ENCODE measurements at regions of chr5 and their contacts with region 1.

Region 1: DNA sequence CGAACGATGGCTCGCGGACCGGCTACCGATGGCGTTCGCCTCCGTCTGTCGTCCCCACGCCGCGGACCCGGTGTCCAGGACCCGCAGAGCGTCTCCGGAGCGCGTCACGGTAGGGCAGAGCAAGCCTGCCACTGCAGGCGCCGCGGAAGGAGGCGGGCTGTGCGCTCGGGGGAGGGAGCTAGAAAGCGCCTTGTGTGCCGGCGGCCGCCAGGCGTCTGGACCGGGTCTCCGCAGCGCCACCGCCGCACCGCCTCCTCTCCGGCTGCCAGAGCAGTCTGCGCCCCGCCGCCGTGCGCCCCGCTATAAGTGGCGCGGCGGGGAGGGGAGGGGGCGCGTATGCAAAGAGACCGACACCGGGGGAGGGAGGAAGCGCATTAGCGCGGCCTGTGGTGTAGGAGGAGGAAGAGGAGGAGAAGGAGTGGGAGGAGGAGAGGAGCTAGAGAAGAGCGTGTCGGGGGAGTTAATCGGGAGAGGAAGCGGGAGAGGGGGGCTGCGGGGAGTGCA is at the start of gene ENC1:
- DNase-seq: peak; percentile 88 to 93
- ATAC-seq: peak; percentile 90 to 92 (median 92)
- H3K4me3 ChIP-seq: peak within 1 kb of the TSS; percentile 78
- H3K27ac ChIP-seq: peak within 1 kb of the TSS; percentile 82
- H3K4me1 ChIP-seq: peaks cover 18% of the 10 kb centered on the region
- H3K27me3 ChIP-seq: no peaks in the 10 kb centered on the region
- CTCF ChIP-seq: peak; percentile 65
- total RNA-seq, gene ENC1: 2.4 to 28.3 (median 10.6) TPM

Region 2: DNA sequence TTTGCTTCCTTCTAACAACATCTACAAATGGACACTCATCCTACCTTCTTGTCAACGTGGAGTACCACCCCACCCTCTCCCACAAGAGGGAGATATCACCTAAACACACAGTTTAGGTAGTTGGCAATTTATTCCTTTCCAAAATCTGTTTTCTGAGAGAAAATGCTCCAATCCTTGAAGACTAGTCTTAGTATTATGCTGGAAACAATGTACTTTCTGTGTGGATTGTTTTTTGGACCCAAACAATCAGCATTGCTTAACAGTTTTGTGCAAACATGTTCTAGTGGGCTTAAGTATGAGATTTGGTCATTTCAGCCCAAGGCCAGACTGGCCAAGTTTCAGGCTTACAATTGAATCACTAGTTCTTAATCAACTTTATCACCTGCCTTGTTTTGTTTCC is 655.4 kb before region 1 on chr5:
- intact Hi-C with region 1: loop called in 1 of 2 experiments (anchors 5 kb)
- DNase-seq: no peak
- ATAC-seq: no peak
- H3K4me3 ChIP-seq: no peak overlapping the region
- H3K27ac ChIP-seq: no peak overlapping the region
- H3K4me1 ChIP-seq: no peaks in the 10 kb centered on the region
- H3K27me3 ChIP-seq: no peaks in the 10 kb centered on the region
- CTCF ChIP-seq: peak; percentile 35

Region 3: GRCh38 chr5:74035521-74035981 is 605.0 kb before region 1 on chr5:
- intact Hi-C with region 1: loop called in 1 of 2 experiments (anchors 5 kb)
- DNase-seq: no peak
- ATAC-seq: peak; percentile 39 to 82 (median 68)
- H3K4me3 ChIP-seq: no peak overlapping the region
- H3K27ac ChIP-seq: no peak overlapping the region
- H3K4me1 ChIP-seq: peaks cover 16% of the 10 kb centered on the region
- H3K27me3 ChIP-seq: no peaks in the 10 kb centered on the region
- CTCF ChIP-seq: peak; percentile 51

Region 4: GRCh38 chr5:74056789-74057164 is 583.7 kb before region 1 on chr5:
- intact Hi-C with region 1: loop called in 1 of 2 experiments (anchors 5 kb)
- DNase-seq: no peak
- ATAC-seq: peak in 3 of 4 donors; percentile 74 to 85 (median 76)
- H3K4me3 ChIP-seq: no peak overlapping the region
- H3K27ac ChIP-seq: no peak overlapping the region
- H3K4me1 ChIP-seq: peaks cover 7% of the 10 kb centered on the region
- H3K27me3 ChIP-seq: peaks cover 0 to 3% (median 0%) of the 10 kb centered on the region in 3 donors
- CTCF ChIP-seq: peak; percentile 50

Region 5: GRCh38 chr5:74288448-74289108 is 351.9 kb before region 1 on chr5:
- intact Hi-C with region 1: loop called (anchors 5 to 10 kb)
- DNase-seq: peak; percentile 51 to 76
- ATAC-seq: peak; percentile 90 to 93 (median 91)
- H3K4me3 ChIP-seq: no peak overlapping the region
- H3K27ac ChIP-seq: peak overlapping the region; percentile 88
- H3K4me1 ChIP-seq: peaks cover 46% of the 10 kb centered on the region
- H3K27me3 ChIP-seq: no peaks in the 10 kb centered on the region
- CTCF ChIP-seq: no peak

Region 6: GRCh38 chr5:74294231-74294705 is 346.2 kb before region 1 on chr5:
- intact Hi-C with region 1: loop called (anchors 5 to 10 kb)
- DNase-seq: peak in 1 of 2 donors; percentile 30
- ATAC-seq: no peak
- H3K4me3 ChIP-seq: no peak overlapping the region
- H3K27ac ChIP-seq: no peak overlapping the region
- H3K4me1 ChIP-seq: peaks cover 32% of the 10 kb centered on the region
- H3K27me3 ChIP-seq: no peaks in the 10 kb centered on the region
- CTCF ChIP-seq: no peak

Region 7: GRCh38 chr5:74408150-74409043 is 232.1 kb before region 1 on chr5:
- intact Hi-C with region 1: loop called (anchors 2 to 10 kb)
- DNase-seq: no peak
- ATAC-seq: no peak
- H3K4me3 ChIP-seq: no peak overlapping the region
- H3K27ac ChIP-seq: peak overlapping the region; percentile 77
- H3K4me1 ChIP-seq: peaks cover 56% of the 10 kb centered on the region
- H3K27me3 ChIP-seq: no peaks in the 10 kb centered on the region
- CTCF ChIP-seq: no peak

Region 8: GRCh38 chr5:74684900-74685851 is 44.7 kb after region 1 on chr5 and contains the start of gene HEXB:
- intact Hi-C with region 1: no loop called
- DNase-seq: peak; percentile 93 to 94
- ATAC-seq: peak; percentile 97 to 99 (median 98)
- H3K4me3 ChIP-seq: peak within 1 kb of the TSS; percentile 85
- H3K27ac ChIP-seq: peak within 1 kb of the TSS; percentile 88
- H3K4me1 ChIP-seq: peaks cover 23% of the 10 kb centered on the region
- H3K27me3 ChIP-seq: peaks cover 0 to 3% (median 0%) of the 10 kb centered on the region in 3 donors
- CTCF ChIP-seq: no peak
- total RNA-seq, gene HEXB: 48.1 to 63.3 (median 50.3) TPM

Measured in psoas muscle (tissue), 8 donors.